Activated CD4-positive, alpha-beta T cell treated with anti-CD3 and anti-CD28 coated beads, Interleukin-2, amount 10 ng/mL, durations not matched to agents 24 days and 14 days (primary cell): ENCODE measurements at regions of chrX and their contacts with region 1.

Region 1: GRCh38 chrX:70454441-70455365 is 10.1 kb downstream of the DLG3 start:
- DNase-seq: peak; percentile 91
- H3K4me3 Mint-ChIP-seq: peak overlapping the region; percentile 94
- H3K27ac Mint-ChIP-seq: peak overlapping the region; percentile 98
- H3K4me1 Mint-ChIP-seq: peaks cover 35% of the 10 kb centered on the region
- H3K27me3 Mint-ChIP-seq: no peaks in the 10 kb centered on the region

Region 2: GRCh38 chrX:70508296-70508911 is 53.7 kb after region 1 on chrX:
- intact Hi-C with region 1: loop called (anchors 1 kb)
- DNase-seq: peak; percentile 57
- H3K4me3 Mint-ChIP-seq: peak overlapping the region; percentile 72
- H3K27ac Mint-ChIP-seq: peak overlapping the region; percentile 85
- H3K4me1 Mint-ChIP-seq: peaks cover 35% of the 10 kb centered on the region
- H3K27me3 Mint-ChIP-seq: no peaks in the 10 kb centered on the region

Region 3: DNA sequence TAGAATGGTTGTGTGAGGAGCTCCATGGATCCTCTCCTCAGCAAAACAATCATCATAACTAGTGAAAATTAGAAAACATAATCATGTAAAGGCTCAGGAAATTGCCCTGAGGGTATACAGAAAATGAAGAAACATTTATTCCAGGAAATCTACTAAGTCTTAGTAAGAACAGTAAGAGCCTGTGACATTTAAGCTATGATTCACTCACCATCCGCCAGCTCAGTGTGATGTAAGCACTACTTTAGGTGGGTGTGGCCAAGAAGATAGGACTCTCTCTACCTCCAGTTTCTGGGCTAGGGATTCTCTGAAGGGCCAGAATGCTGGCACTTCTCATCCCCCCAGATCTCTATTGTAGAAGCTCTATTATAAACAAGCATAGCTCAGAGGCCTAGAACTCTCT is 137.4 kb after region 1 on chrX:
- intact Hi-C with region 1: loop called (anchors 1 kb)
- DNase-seq: peak; percentile 73
- H3K4me3 Mint-ChIP-seq: no peak overlapping the region
- H3K27ac Mint-ChIP-seq: peak overlapping the region; percentile 85
- H3K4me1 Mint-ChIP-seq: peaks cover 13% of the 10 kb centered on the region
- H3K27me3 Mint-ChIP-seq: no peaks in the 10 kb centered on the region

Region 4: GRCh38 chrX:70664726-70665125 is 210.0 kb after region 1 on chrX:
- intact Hi-C with region 1: loop called (anchors 1 kb)
- DNase-seq: peak; percentile 63
- H3K4me3 Mint-ChIP-seq: no peak overlapping the region
- H3K27ac Mint-ChIP-seq: no peak overlapping the region
- H3K4me1 Mint-ChIP-seq: no peaks in the 10 kb centered on the region
- H3K27me3 Mint-ChIP-seq: no peaks in the 10 kb centered on the region

Region 5: GRCh38 chrX:71365876-71366673 is 911.4 kb after region 1 on chrX and contains the start of gene TAF1:
- intact Hi-C with region 1: loop called (anchors 10 kb)
- DNase-seq: peak; percentile 96
- H3K4me3 Mint-ChIP-seq: peak within 1 kb of the TSS; percentile 98
- H3K27ac Mint-ChIP-seq: peak within 1 kb of the TSS; percentile 100
- H3K4me1 Mint-ChIP-seq: peaks cover 21% of the 10 kb centered on the region
- H3K27me3 Mint-ChIP-seq: no peaks in the 10 kb centered on the region
- total RNA-seq, gene TAF1: 46.7 and 47.8 TPM in 2 replicates